ENCODE measurements at regions of chr10 and their contacts with region 1.

Region 1: GRCh38 chr10:92689663-92690210 is at the start of gene HHEX:
- DNase-seq: peak; percentile 38 to 64
- H3K4me3 ChIP-seq: peak within 1 kb of the TSS; percentile 87
- H3K4me3 Mint-ChIP-seq: peak within 1 kb of the TSS; percentile 77
- H3K27ac Mint-ChIP-seq: no peak within 1 kb of the TSS
- H3K4me1 ChIP-seq: peaks cover 15% of the 10 kb centered on the region
- H3K4me1 Mint-ChIP-seq: peaks cover 7% of the 10 kb centered on the region
- H3K27me3 ChIP-seq: no peaks in the 10 kb centered on the region
- H3K27me3 Mint-ChIP-seq: no peaks in the 10 kb centered on the region
- CTCF ChIP-seq: no peak
- total RNA-seq, gene HHEX: 5.8 and 6.7 TPM in 2 replicates

Region 2: GRCh38 chr10:92742331-92743228 is 52.8 kb after region 1 on chr10:
- CTCF ChIA-PET with region 1: no interaction called
- POLR2A ChIA-PET with region 1: no interaction called
- intact Hi-C with region 1: no loop called
- DNase-seq: no peak
- H3K4me3 ChIP-seq: no peak overlapping the region
- H3K4me3 Mint-ChIP-seq: no peak overlapping the region
- H3K27ac Mint-ChIP-seq: no peak overlapping the region
- H3K4me1 ChIP-seq: no peaks in the 10 kb centered on the region
- H3K4me1 Mint-ChIP-seq: no peaks in the 10 kb centered on the region
- H3K27me3 ChIP-seq: no peaks in the 10 kb centered on the region
- H3K27me3 Mint-ChIP-seq: peaks cover 8% of the 10 kb centered on the region
- CTCF ChIP-seq: no peak

Region 3: GRCh38 chr10:92790440-92790839 is 100.7 kb after region 1 on chr10:
- CTCF ChIA-PET with region 1: no interaction called
- POLR2A ChIA-PET with region 1: no interaction called
- intact Hi-C with region 1: no loop called
- DNase-seq: no peak
- H3K4me3 ChIP-seq: no peak overlapping the region
- H3K4me3 Mint-ChIP-seq: no peak overlapping the region
- H3K27ac Mint-ChIP-seq: no peak overlapping the region
- H3K4me1 ChIP-seq: no peaks in the 10 kb centered on the region
- H3K4me1 Mint-ChIP-seq: no peaks in the 10 kb centered on the region
- H3K27me3 ChIP-seq: no peaks in the 10 kb centered on the region
- H3K27me3 Mint-ChIP-seq: peaks cover 8% of the 10 kb centered on the region
- CTCF ChIP-seq: no peak

Region 4: DNA sequence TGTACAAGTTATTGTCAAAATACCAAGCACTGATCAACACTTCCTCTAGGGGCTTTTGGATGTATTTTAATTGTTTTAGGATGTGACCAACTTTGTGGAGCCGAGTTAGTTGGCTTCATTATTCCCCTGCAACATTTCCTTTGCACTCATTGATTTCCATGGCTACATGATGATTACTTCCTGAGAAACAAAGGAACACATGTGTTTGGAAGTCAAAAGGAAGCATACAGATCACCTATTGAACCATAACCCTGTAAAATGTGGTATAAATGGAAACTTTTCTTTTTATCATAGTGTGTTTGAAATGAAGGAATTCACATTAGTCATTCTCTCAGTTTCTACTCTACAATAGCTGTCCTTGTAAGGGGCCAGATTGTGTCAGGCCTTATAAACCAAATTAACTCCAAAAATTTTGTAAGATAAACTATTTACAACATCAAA is 126.4 kb after region 1 on chr10:
- CTCF ChIA-PET with region 1: no interaction called
- POLR2A ChIA-PET with region 1: no interaction called
- intact Hi-C with region 1: loop called (anchors 10 kb)
- DNase-seq: no peak
- H3K4me3 ChIP-seq: no peak overlapping the region
- H3K4me3 Mint-ChIP-seq: no peak overlapping the region
- H3K27ac Mint-ChIP-seq: no peak overlapping the region
- H3K4me1 ChIP-seq: peaks cover 2% of the 10 kb centered on the region
- H3K4me1 Mint-ChIP-seq: peaks cover 5% of the 10 kb centered on the region
- H3K27me3 ChIP-seq: peaks cover 3% of the 10 kb centered on the region; the same call in 1 of the 2 replicates
- H3K27me3 Mint-ChIP-seq: peaks cover 7% of the 10 kb centered on the region
- CTCF ChIP-seq: no peak

Measured in Caco-2 (cell line).